ENCODE measurements at regions of chr18 and their contacts with region 1.

Region 1: GRCh38 chr18:51621113-51621863 is 423.8 kb upstream of the MEX3C start:
- DNase-seq: peak; percentile 49
- H3K4me3 Mint-ChIP-seq: no peak overlapping the region
- H3K27ac Mint-ChIP-seq: no peak overlapping the region
- H3K4me1 Mint-ChIP-seq: no peaks in the 10 kb centered on the region
- H3K27me3 Mint-ChIP-seq: peaks cover 14% of the 10 kb centered on the region

Region 2: DNA sequence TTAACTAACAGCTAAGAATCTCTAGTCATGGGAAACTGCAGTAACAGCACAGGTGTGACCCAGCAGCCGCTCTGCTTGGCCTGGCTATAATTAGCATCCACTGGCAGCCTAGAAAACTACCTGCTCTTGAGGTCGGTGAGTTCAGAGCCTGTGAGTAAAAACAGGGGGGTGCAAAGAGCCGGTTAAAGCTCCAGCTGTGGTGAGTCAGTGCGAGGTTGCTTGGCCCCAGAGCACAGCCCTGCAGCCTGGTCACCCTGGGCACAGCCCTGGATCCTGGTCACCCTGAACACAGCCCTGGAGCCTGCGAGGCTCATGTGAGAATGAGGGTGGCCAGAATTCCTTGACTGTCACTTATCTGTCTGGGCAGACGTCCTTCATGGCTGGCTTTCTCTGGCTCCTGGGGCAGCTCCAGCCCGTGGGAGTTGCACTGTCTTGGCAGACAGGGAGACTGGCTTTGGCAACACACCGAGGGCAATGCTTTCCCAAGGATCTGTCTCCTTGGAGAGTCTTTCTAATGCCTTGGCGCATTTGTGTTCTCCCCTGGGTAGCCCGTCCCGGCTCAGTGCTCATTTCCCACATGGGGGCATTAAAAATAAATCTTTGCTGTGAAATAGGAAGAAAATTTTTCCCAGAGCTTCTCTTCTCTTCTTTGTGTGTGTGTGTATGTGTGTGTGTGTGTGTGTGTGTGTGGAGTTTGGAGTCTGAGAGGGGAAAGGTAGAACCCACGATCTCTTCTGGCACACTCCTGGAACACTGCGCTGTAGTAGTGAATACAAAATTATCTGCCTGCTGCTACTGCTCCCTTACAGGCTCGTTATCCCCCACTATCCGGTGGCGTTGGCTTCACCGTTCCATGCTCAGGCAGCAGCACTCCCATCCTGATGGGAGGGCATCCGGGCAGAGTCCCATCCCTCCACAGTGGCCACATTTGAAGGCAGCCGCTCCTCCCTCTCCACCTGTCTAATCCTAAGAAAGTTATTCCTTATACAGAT is 173.6 kb before region 1 on chr18:
- CTCF ChIA-PET with region 1: no interaction called
- POLR2A ChIA-PET with region 1: no interaction called
- intact Hi-C with region 1: no loop called
- DNase-seq: no peak
- H3K4me3 Mint-ChIP-seq: no peak overlapping the region
- H3K27ac Mint-ChIP-seq: no peak overlapping the region
- H3K4me1 Mint-ChIP-seq: no peaks in the 10 kb centered on the region
- H3K27me3 Mint-ChIP-seq: peaks cover 15% of the 10 kb centered on the region

Region 3: GRCh38 chr18:51522821-51523220 is 98.5 kb before region 1 on chr18:
- CTCF ChIA-PET with region 1: no interaction called
- POLR2A ChIA-PET with region 1: no interaction called
- intact Hi-C with region 1: no loop called
- DNase-seq: no peak
- H3K4me3 Mint-ChIP-seq: no peak overlapping the region
- H3K27ac Mint-ChIP-seq: no peak overlapping the region
- H3K4me1 Mint-ChIP-seq: no peaks in the 10 kb centered on the region
- H3K27me3 Mint-ChIP-seq: peaks cover 5% of the 10 kb centered on the region

Region 4: DNA sequence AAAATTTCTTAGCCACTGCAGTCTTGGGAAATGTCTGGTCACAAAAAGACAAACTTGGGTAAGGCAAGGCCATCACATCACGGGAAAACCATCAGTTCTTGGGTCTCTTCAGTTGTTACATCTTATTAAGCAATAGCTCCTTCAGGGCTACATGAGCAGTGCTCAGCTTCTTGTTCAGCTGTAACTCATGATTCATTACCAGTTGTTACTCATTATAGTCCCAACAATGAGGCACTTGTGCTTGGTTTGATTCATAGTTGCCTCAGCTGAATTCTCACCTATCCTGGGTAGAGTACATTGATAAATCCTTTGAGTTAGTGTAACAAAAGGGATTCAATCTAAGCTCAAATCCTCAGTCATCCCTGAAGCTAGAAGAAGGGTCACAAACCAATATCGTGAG is 616.3 kb after region 1 on chr18:
- CTCF ChIA-PET with region 1: no interaction called
- POLR2A ChIA-PET with region 1: no interaction called
- intact Hi-C with region 1: no loop called
- DNase-seq: no peak
- H3K4me3 Mint-ChIP-seq: no peak overlapping the region
- H3K27ac Mint-ChIP-seq: no peak overlapping the region
- H3K4me1 Mint-ChIP-seq: no peaks in the 10 kb centered on the region
- H3K27me3 Mint-ChIP-seq: no peaks in the 10 kb centered on the region

Region 5: DNA sequence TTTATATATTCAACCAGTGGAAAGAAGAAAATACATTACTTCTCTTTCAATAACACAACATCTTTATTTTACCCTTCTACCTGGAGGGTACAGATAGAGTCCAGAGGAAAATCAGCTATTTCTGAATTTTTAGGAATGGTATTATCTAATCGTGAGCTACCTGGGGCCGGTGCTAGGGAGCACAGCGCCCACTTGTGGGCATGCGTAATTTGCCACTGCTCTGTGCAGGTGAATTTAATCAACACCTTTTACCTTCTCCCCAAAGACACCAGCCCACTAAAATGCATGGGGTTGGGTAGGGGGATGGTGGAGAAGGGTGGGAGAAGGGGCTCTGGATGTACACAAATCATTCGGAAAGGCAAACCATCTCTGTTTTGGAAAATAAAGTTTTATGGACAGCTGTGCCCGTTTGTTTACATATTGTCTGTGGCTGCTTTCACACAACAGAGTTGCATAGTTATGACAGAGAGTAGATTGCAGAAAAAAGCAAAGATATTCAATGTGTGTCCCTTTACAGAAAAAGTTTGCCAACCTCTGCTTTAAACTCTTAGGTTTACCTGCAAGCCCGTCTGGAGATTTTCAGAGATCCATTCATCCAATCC is 667.2 kb after region 1 on chr18:
- CTCF ChIA-PET with region 1: no interaction called
- POLR2A ChIA-PET with region 1: no interaction called
- intact Hi-C with region 1: loop called (anchors 2 kb)
- DNase-seq: peak; percentile 30
- H3K4me3 Mint-ChIP-seq: no peak overlapping the region
- H3K27ac Mint-ChIP-seq: no peak overlapping the region
- H3K4me1 Mint-ChIP-seq: no peaks in the 10 kb centered on the region
- H3K27me3 Mint-ChIP-seq: no peaks in the 10 kb centered on the region